Panc1 (cell line): ENCODE measurements at regions of chr11 and their contacts with region 1.

Region 1: GRCh38 chr11:28107748-28108618 is at the starts of genes KIF18A and METTL15:
- DNase-seq: peak; percentile 91
- ATAC-seq: peak; percentile 97
- H3K4me3 ChIP-seq: peak within 1 kb of the TSS; percentile 84 to 96
- H3K27ac ChIP-seq: peak within 1 kb of the TSS; percentile 99
- H3K4me1 ChIP-seq: peaks cover 40% of the 10 kb centered on the region
- H3K27me3 ChIP-seq: no peaks in the 10 kb centered on the region
- CTCF ChIP-seq: no peak
- total RNA-seq, gene KIF18A: 20.8 TPM
- total RNA-seq, gene METTL15: 11.4 TPM

Region 2: DNA sequence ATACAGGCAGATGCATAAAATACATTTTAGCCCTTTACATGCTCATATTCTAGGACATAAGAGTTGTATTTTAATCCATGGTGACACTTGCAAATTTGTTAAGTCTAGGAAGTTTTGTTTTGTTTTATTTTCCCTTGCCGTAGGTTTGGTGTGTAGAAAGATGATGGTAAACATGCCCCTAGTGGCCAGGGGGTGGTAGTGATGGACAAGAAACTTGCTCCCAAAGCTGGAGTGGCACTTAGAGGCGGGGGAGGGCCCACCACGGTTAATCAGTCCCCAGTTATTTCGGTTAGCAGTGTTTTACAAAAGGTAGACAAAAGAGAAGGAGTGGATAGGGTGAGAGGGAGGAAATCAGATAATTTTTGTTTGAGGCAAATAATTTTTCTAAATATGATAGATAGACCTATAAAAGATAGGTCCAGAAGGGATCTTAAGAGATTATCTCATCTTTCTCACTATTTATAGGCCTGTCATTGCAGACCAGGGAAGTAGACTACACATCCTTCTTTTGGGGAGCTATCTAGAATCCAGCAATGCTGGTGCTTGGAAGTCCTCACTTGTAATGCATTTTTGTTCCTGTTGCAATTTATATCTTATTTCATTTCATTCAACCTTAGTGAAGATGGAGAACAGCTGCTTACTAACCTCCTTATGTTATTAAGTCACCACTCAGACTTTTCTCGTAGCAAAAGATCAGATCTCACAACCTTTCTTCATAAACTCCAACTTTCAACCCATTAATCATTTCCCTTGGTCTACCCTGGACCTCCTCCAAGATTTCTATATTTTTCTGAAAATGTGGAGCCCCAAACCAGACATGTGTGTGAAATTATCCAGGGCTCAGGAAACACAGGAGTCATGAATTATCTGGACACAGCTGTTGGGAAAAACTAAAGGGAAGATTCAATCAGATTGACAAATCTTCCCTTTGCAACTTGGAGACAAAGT is 401.8 kb before region 1 on chr11:
- CTCF ChIA-PET with region 1: no interaction called
- POLR2A ChIA-PET with region 1: interaction called, 10 read pairs
- in situ Hi-C with region 1: loop called (anchors 25 kb)
- intact Hi-C with region 1: no loop called
- DNase-seq: no peak
- ATAC-seq: no peak
- H3K4me3 ChIP-seq: no peak overlapping the region
- H3K27ac ChIP-seq: no peak overlapping the region
- H3K4me1 ChIP-seq: peaks cover 6% of the 10 kb centered on the region
- H3K27me3 ChIP-seq: peaks cover 14% of the 10 kb centered on the region
- CTCF ChIP-seq: peak; percentile 84

Region 3: DNA sequence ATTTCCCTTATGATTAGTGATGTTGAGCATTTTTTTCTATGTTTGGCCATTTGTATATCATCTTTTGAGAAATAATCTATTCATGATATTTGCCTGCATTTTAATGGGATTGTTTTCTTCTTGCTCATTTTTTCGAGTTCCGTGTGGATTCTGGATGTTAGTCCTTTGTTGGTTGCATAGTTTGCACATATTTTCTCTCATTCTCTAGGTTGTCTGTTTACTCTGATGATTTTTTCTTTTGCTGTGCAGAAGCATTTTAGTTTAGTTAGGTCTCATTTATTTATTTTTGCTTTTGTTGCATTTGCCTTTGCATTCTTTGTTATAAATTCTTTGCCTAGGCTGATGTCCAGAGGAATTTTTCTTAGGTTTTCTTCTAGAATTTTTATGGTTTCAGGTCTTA is 87.5 kb after region 1 on chr11:
- CTCF ChIA-PET with region 1: no interaction called
- POLR2A ChIA-PET with region 1: interaction called, 13 read pairs
- in situ Hi-C with region 1: no loop called
- intact Hi-C with region 1: no loop called
- DNase-seq: no peak
- ATAC-seq: no peak
- H3K4me3 ChIP-seq: no peak overlapping the region
- H3K27ac ChIP-seq: no peak overlapping the region
- H3K4me1 ChIP-seq: no peaks in the 10 kb centered on the region
- H3K27me3 ChIP-seq: no peaks in the 10 kb centered on the region
- CTCF ChIP-seq: no peak

Region 4: GRCh38 chr11:28384418-28384817 is 276.4 kb after region 1 on chr11:
- CTCF ChIA-PET with region 1: no interaction called
- POLR2A ChIA-PET with region 1: interaction called, 22 read pairs
- in situ Hi-C with region 1: no loop called
- intact Hi-C with region 1: no loop called
- DNase-seq: no peak
- ATAC-seq: no peak
- H3K4me3 ChIP-seq: no peak overlapping the region
- H3K27ac ChIP-seq: no peak overlapping the region
- H3K4me1 ChIP-seq: no peaks in the 10 kb centered on the region
- H3K27me3 ChIP-seq: no peaks in the 10 kb centered on the region
- CTCF ChIP-seq: no peak

Region 5: DNA sequence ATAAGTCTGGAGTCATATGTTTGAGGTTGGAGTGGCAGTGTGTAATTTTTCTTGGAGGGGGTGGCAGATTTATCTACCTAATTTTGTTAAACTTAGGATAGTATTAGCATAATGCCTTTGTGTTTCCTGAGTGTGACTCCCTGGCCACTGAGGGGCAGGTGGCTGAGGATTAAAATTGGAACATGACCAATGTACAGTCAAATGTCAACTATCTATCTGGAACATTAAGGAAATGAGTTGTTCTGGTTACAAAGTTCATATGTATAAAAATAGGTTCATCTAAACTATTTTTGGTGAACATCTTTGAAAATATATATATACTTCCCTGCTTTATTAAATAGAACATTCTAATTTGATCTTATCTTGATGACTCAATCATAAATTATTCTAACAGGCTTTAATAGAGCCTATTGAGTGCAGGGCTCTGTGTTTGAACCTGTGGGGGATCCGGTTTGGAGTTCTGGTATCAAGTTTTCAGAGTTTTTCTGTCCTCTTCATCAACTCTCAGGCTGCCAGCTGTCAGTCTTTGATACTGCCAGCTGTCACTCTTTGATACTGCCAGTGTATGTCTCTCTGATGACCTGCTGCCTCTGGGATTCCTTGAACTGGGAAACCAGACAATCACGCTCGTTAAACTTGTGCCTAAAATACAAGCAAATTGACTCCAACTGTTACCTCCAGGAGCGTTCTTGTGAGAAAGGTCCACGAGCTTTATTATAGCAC is 309.8 kb after region 1 on chr11:
- CTCF ChIA-PET with region 1: no interaction called
- POLR2A ChIA-PET with region 1: no interaction called
- in situ Hi-C with region 1: no loop called
- intact Hi-C with region 1: no loop called
- DNase-seq: no peak
- ATAC-seq: no peak
- H3K4me3 ChIP-seq: no peak overlapping the region
- H3K27ac ChIP-seq: no peak overlapping the region
- H3K4me1 ChIP-seq: no peaks in the 10 kb centered on the region
- H3K27me3 ChIP-seq: no peaks in the 10 kb centered on the region
- CTCF ChIP-seq: no peak

Region 6: GRCh38 chr11:28584992-28585391 is 477.0 kb after region 1 on chr11:
- CTCF ChIA-PET with region 1: no interaction called
- POLR2A ChIA-PET with region 1: interaction called, 18 read pairs
- in situ Hi-C with region 1: no loop called
- intact Hi-C with region 1: no loop called
- DNase-seq: no peak
- ATAC-seq: no peak
- H3K4me3 ChIP-seq: no peak overlapping the region
- H3K27ac ChIP-seq: no peak overlapping the region
- H3K4me1 ChIP-seq: no peaks in the 10 kb centered on the region
- H3K27me3 ChIP-seq: no peaks in the 10 kb centered on the region
- CTCF ChIP-seq: no peak